Ovary (tissue), 10 donors: ENCODE measurements at regions of chr4 and their contacts with region 1.

Region 1: GRCh38 chr4:105520817-105521790 is 31.3 kb upstream of the ARHGEF38 start:
- DNase-seq: no peak
- H3K4me3 ChIP-seq: no peak overlapping the region
- H3K27ac ChIP-seq: no peak overlapping the region
- H3K4me1 ChIP-seq: no peaks in the 10 kb centered on the region
- H3K27me3 ChIP-seq: no peaks in the 10 kb centered on the region
- CTCF ChIP-seq: no peak
- EP300 ChIP-seq: no peak
- POLR2A ChIP-seq: no peak

Region 2: DNA sequence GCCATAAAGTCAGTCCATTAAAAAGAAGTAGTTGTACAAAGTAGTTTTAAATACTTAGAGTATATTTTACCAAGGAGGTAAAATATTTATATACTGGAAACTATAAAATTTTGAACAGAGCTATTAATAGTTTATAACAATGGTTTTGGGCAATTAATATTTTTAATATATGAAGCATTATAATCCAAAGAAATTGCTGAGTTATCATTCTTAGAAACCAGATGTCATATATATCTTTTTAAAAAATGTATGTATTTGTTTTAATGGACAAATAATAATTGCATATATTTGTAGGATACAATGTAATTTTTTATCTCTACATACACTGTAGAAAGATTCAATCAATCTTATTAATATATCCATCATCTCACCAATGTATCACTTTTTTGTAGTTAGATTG is 1234.2 kb before region 1 on chr4:
- intact Hi-C with region 1: no loop called
- DNase-seq: no peak
- H3K4me3 ChIP-seq: no peak overlapping the region
- H3K27ac ChIP-seq: no peak overlapping the region
- H3K4me1 ChIP-seq: no peaks in the 10 kb centered on the region
- H3K27me3 ChIP-seq: no peaks in the 10 kb centered on the region
- CTCF ChIP-seq: no peak
- EP300 ChIP-seq: no peak
- POLR2A ChIP-seq: no peak

Region 3: DNA sequence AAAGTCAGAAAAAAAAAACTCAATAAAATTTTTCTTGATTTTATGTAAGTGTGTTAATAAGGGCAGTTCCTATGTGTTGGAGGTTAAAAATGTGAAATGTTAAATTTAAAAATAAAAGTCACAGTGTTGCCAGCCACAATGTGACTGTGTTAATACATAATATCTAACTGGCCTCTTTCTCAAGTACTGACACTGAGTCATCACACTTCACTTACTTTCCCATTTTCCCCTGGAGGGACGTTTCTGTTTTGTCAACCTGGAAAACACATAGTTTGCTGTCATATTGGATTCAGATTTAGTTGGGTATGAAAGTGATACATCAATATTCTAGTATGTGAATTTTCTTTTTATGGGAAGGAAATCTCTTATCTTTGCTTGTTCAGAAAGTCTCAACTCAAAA is 77.7 kb after region 1 on chr4:
- intact Hi-C with region 1: no loop called
- DNase-seq: no peak
- H3K4me3 ChIP-seq: no peak overlapping the region
- H3K27ac ChIP-seq: no peak overlapping the region
- H3K4me1 ChIP-seq: no peaks in the 10 kb centered on the region
- H3K27me3 ChIP-seq: no peaks in the 10 kb centered on the region
- CTCF ChIP-seq: no peak
- EP300 ChIP-seq: no peak
- POLR2A ChIP-seq: no peak

Region 4: DNA sequence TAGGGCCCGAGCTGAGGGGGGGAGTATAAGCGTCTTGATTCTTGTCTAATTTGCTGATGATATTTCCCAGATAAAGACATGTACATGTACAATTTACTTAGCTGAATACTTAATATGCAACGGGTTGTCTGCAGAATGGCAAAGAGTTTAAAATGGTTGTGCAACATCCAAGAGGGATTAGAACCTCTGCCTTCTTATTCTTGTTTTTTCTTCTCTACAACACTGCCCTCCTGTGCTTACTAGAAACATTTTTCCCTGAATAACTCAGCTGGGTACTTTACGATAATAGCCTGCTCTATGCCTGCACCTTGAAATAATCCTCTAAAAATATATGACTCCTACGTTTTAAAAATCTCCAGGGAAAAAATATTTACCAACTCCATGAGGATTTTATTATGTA is 145.6 kb after region 1 on chr4:
- intact Hi-C with region 1: loop called in 1 of 4 experiments (anchors 10 kb)
- DNase-seq: no peak
- H3K4me3 ChIP-seq: no peak overlapping the region
- H3K27ac ChIP-seq: no peak overlapping the region
- H3K4me1 ChIP-seq: no peaks in the 10 kb centered on the region
- H3K27me3 ChIP-seq: no peaks in the 10 kb centered on the region
- CTCF ChIP-seq: no peak
- EP300 ChIP-seq: no peak
- POLR2A ChIP-seq: no peak